PC-3 (cell line): ENCODE measurements at regions of chr3 and their contacts with region 1.

Region 1: DNA sequence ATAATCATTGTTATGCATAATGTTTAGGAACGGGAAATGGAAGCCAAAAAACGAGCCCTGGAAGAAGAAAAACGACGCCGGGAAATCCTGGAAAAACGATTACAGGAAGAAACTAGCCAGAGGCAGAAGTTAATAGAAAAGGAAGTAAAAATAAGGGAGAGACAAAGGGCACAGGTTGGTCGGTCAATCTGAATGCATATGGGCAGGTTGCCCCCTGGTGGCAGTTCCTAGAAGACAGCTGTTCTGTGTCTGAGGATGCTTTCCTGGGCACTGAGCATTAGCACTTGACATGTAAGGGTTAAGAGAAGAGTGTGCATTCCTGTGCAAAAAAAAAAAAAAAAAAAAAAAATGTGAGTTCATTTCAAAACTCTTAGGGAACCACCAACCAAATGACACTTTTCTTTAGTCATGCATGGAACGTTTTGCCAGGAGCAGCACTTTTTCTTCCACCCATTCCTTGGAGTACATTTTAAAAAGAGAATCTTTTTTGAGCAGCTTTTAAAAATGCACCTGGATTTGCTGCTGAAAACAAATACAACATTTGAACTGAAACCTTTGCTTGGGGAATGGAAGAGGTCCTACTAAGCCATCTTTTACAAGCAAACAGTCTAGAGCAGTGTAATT is 11.1 kb upstream of the ABHD10 start:
- DNase-seq: peak; percentile 92
- ATAC-seq: peak; percentile 73
- H3K4me3 ChIP-seq: no peak overlapping the region
- H3K27ac ChIP-seq: peak overlapping the region; percentile 13
- H3K4me1 ChIP-seq: peaks cover 41% of the 10 kb centered on the region
- H3K27me3 ChIP-seq: no peaks in the 10 kb centered on the region
- CTCF ChIP-seq: peak; percentile 96

Region 2: GRCh38 chr3:111454538-111454937 is 513.2 kb before region 1 on chr3:
- CTCF ChIA-PET with region 1: no interaction called
- POLR2A ChIA-PET with region 1: no interaction called
- intact Hi-C with region 1: no loop called
- DNase-seq: no peak
- ATAC-seq: no peak
- H3K4me3 ChIP-seq: no peak overlapping the region
- H3K27ac ChIP-seq: no peak overlapping the region
- H3K4me1 ChIP-seq: no peaks in the 10 kb centered on the region
- H3K27me3 ChIP-seq: 0 out of 2 replicates have a peak, but pooled peaks cover 4% of the 10 kb centered on the region
- CTCF ChIP-seq: no peak

Region 3: DNA sequence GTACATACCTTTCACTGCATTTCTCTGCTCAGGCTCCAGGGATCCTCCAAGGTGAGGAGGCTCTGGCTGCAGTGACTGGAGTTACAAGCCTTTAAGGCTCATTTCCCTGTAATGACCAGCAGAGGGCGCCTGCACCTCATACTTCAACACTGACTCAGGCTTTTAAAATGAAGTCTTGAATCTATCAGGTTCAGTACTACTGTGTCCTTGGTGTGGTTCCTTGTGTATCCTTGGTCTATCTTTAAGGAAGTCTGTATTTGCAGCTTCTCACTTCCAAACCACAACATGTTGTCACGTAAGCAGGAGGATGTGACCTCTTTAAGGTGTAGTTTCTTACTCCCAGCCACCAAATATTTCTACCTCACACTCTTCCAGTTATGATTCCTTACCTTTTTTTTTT is 250.2 kb before region 1 on chr3:
- CTCF ChIA-PET with region 1: no interaction called
- POLR2A ChIA-PET with region 1: no interaction called
- intact Hi-C with region 1: loop called (anchors 1 kb)
- DNase-seq: peak; percentile 97
- ATAC-seq: peak; percentile 88
- H3K4me3 ChIP-seq: no peak overlapping the region
- H3K27ac ChIP-seq: peak overlapping the region; percentile 25
- H3K4me1 ChIP-seq: peaks cover 35% of the 10 kb centered on the region
- H3K27me3 ChIP-seq: no peaks in the 10 kb centered on the region
- CTCF ChIP-seq: peak; percentile 98

Region 4: GRCh38 chr3:111859974-111860859 is 107.5 kb before region 1 on chr3:
- CTCF ChIA-PET with region 1: interaction called, 5 read pairs
- POLR2A ChIA-PET with region 1: interaction called, 8 read pairs
- intact Hi-C with region 1: loop called (anchors 1 kb)
- DNase-seq: peak; percentile 96
- ATAC-seq: peak; percentile 68
- H3K4me3 ChIP-seq: peak overlapping the region; percentile 72
- H3K27ac ChIP-seq: peak overlapping the region; percentile 94
- H3K4me1 ChIP-seq: peaks cover 46% of the 10 kb centered on the region
- H3K27me3 ChIP-seq: no peaks in the 10 kb centered on the region
- CTCF ChIP-seq: peak; percentile 71

Region 5: DNA sequence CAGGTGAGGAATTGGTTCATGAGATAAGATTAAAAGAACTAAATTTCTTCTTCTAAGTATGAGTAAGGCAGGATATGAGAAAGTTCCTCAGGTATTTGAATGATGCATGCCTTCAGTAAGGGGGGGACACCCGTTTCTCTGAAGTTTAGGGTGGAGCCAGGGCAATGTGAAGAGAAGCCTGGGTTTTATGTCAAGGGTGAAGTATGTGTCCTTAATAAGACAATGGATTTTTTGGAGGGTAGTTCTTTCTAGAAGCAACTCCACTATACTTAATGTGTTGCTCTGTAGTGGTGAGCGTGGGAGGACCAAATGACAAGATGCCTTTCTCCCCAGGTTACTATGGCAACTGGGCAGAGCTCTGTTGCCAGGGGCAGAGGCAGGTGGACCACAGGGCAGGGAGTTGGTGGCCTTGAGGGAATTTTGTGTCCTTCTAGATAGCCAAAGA is 64.7 kb before region 1 on chr3:
- CTCF ChIA-PET with region 1: no interaction called
- POLR2A ChIA-PET with region 1: no interaction called
- intact Hi-C with region 1: loop called (anchors 2 kb)
- DNase-seq: peak; percentile 97
- ATAC-seq: peak; percentile 90
- H3K4me3 ChIP-seq: no peak overlapping the region
- H3K27ac ChIP-seq: peak overlapping the region; percentile 80
- H3K4me1 ChIP-seq: peaks cover 38% of the 10 kb centered on the region
- H3K27me3 ChIP-seq: no peaks in the 10 kb centered on the region
- CTCF ChIP-seq: no peak

Region 6: GRCh38 chr3:111936191-111936841 is 31.4 kb before region 1 on chr3:
- CTCF ChIA-PET with region 1: interaction called, 9 read pairs
- POLR2A ChIA-PET with region 1: no interaction called
- intact Hi-C with region 1: loop called (anchors 2 kb)
- DNase-seq: peak; percentile 89
- ATAC-seq: peak; percentile 94
- H3K4me3 ChIP-seq: peak overlapping the region; percentile 18; the same call in 1 of the 2 replicates
- H3K27ac ChIP-seq: peak overlapping the region; percentile 89
- H3K4me1 ChIP-seq: peaks cover 45% of the 10 kb centered on the region
- H3K27me3 ChIP-seq: no peaks in the 10 kb centered on the region
- CTCF ChIP-seq: no peak

Region 7: GRCh38 chr3:111978493-111979433 is 11.0 kb after region 1 on chr3 and contains the start of gene ABHD10:
- CTCF ChIA-PET with region 1: interaction called, 3 read pairs
- POLR2A ChIA-PET with region 1: interaction called, 18 read pairs
- intact Hi-C with region 1: no loop called
- DNase-seq: peak; percentile 100
- ATAC-seq: peak; percentile 90
- H3K4me3 ChIP-seq: peak within 1 kb of the TSS; percentile 80
- H3K27ac ChIP-seq: peak within 1 kb of the TSS; percentile 36
- H3K4me1 ChIP-seq: peaks cover 28% of the 10 kb centered on the region
- H3K27me3 ChIP-seq: no peaks in the 10 kb centered on the region
- CTCF ChIP-seq: no peak
- total RNA-seq, gene ABHD10: 29.1 and 45.0 TPM in 2 replicates